ENCODE measurements at regions of chr19 and their contacts with region 1.

Region 1: GRCh38 chr19:42794765-42795164 is 29.3 kb upstream of the PSG8 start:
- DNase-seq: no peak
- ATAC-seq: no peak
- H3K4me3 ChIP-seq: no peak overlapping the region
- H3K27ac ChIP-seq: no peak overlapping the region
- H3K4me1 ChIP-seq: no peaks in the 10 kb centered on the region
- H3K27me3 ChIP-seq: no peaks in the 10 kb centered on the region

Region 2: GRCh38 chr19:42850981-42851717 is 56.4 kb after region 1 on chr19:
- intact Hi-C with region 1: loop called in 1 of 2 experiments (anchors 10 kb)
- DNase-seq: peak; percentile 67 to 82
- ATAC-seq: no peak
- H3K4me3 ChIP-seq: no peak overlapping the region
- H3K27ac ChIP-seq: peak overlapping the region; percentile 43 to 79
- H3K4me1 ChIP-seq: no peaks in the 10 kb centered on the region
- H3K27me3 ChIP-seq: no peaks in the 10 kb centered on the region

Measured in aorta (tissue), 5 donors.